PC-9 (cell line): ENCODE measurements at regions of chr22 and their contacts with region 1.

Region 1: DNA sequence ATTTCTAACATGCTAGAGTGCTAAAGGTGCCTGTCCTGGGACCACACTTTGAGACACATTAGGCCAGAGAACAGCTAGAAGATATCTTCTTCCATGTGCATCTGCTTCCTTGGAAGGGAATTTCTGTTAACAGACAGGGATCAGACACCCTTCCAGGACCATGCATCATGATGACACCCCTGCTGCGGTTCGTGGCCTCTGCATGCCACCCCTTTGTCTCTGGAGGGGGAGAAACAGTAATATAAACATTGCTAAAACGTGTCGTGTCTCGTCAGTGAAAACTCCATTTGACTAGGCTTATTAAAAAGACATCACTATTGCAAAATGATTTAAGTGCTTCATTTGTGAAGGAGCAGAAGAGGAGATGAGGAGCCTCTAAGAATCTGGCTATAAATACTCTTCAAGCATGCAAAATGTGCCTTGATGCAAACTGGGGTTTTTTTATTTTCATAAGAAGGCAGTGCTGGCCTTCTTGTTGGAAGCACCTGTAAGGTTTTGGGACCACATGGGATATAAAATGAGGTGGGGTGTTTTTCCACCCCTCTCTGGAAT is 141.6 kb downstream of the MYO18B start:
- DNase-seq: no peak
- H3K4me3 ChIP-seq: no peak overlapping the region
- H3K27ac ChIP-seq: no peak overlapping the region
- H3K4me1 ChIP-seq: no peaks in the 10 kb centered on the region
- H3K27me3 ChIP-seq: peaks cover 5% of the 10 kb centered on the region; the same call in 1 of the 2 replicates
- CTCF ChIP-seq: no peak

Region 2: GRCh38 chr22:25485626-25486545 is 397.7 kb before region 1 on chr22:
- CTCF ChIA-PET with region 1: no interaction called
- POLR2A ChIA-PET with region 1: no interaction called
- intact Hi-C with region 1: no loop called
- DNase-seq: no peak
- H3K4me3 ChIP-seq: no peak overlapping the region
- H3K27ac ChIP-seq: no peak overlapping the region
- H3K4me1 ChIP-seq: no peaks in the 10 kb centered on the region
- H3K27me3 ChIP-seq: peaks cover 30% of the 10 kb centered on the region
- CTCF ChIP-seq: no peak

Region 3: DNA sequence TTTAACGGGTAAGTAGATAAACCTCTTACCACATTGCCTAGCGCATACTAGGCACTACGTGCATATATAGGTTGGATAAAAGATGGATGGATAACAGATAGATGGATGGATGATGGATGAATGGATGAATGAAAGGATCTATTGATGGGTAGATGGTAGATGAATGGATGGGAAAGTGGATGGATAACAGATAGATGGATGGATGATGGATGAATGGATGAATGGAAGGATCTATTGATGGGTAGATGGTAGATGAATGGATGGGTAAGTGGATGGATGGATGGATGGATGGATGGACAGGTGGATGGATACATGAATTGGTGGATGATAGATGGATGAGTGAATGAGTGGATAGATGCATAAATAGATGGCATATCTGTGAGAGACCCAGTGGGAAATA is 1363.0 kb after region 1 on chr22:
- CTCF ChIA-PET with region 1: no interaction called
- POLR2A ChIA-PET with region 1: interaction called, 11 read pairs
- intact Hi-C with region 1: no loop called
- DNase-seq: no peak
- H3K4me3 ChIP-seq: no peak overlapping the region
- H3K27ac ChIP-seq: no peak overlapping the region
- H3K4me1 ChIP-seq: no peaks in the 10 kb centered on the region
- H3K27me3 ChIP-seq: no peaks in the 10 kb centered on the region
- CTCF ChIP-seq: no peak